ENCODE measurements at regions of chr9 and their contacts with region 1.

Region 1: DNA sequence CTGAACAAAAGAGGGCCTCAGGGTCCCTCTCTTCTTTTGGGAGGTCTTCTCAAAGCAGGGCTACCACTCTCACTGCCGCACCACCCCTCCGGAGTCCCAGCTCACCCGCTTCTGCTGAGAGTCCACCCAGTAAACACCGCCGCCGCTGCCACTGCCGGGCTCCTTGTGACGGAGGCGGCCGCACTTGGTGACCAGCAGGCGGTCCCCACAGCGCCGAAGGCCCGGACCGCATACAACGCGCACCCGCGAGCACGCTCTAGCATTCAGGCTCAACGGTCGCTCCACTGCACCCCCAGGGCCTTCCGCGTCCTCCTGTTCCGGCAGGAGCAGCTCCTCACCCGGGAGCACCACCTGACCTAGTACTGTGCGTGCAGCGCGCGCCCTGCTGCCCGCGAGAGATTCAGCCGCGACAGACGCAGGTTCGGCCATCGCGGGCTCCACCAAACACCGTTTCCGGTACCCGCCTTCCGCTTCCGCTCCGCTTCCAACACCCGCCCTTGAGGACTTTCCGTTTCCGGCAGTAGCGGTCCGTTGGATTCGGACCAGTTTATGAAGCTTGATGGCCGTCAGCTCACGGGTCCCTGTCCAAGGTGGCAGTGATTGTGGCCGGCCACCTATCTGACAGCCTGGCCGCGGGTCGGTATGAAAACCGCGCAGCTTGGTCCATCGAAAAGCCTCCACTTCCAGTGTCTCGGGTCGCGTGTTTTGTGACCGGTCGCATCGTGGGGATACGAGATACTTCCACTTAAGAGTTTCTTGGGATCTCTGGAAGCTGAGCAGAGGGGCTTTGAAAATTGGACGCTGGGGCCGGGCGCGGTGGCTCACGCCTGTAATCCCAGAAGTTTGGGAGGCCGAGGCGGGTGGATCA is at the start of gene EXOSC3:
- DNase-seq: peak; percentile 91 to 95
- ATAC-seq: peak; percentile 95 to 99 (median 98)
- H3K4me3 ChIP-seq: peak within 1 kb of the TSS; percentile 92
- H3K27ac ChIP-seq: peak within 1 kb of the TSS; percentile 86
- H3K4me1 ChIP-seq: peaks cover 5% of the 10 kb centered on the region
- H3K27me3 ChIP-seq: peaks cover 0 to 4% (median 0%) of the 10 kb centered on the region in 3 donors
- CTCF ChIP-seq: peak; percentile 20
- total RNA-seq, gene EXOSC3: 12.9 to 18.9 (median 13.9) TPM

Region 2: DNA sequence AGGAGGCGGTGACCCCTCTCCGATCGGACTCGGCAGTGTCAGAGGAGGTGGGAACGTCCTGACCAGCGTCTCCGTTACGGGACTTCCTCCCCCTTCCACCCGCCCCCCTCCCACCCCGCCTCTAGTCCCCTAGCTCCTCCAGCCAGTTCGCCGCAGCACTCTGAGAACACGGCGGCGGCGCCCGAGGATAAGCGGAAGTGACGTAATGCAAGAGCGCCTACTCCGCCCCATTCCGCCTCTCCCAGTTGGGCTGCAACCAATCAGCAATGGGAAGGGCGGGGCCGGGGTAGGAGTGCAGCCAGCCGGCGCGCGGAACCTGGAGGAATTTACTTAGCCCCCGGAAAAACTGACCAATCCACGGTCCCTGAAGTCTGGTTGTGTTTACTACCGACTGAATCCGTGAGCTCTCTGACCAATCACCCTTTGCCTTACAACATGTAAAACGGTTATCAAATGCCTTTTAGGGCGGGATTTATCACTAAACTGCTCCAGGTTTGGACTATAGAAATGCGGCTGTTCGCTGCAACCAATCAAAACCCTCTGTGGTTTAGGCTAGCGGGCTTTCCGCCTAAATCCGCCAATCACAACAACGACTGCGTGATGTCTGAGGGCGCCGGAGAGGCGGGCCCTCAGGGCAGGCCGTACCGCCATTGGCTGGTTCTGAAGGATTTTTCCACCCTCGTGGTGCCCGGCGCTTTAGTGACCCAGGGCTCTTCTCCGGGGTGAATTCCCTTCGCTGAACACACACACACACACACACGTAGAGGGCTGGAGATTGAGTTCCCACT is 319.4 kb before region 1 on chr9 and contains the start of gene ZBTB5:
- intact Hi-C with region 1: loop called in 1 of 2 experiments (anchors 10 kb)
- DNase-seq: peak; percentile 99
- ATAC-seq: peak; percentile 89 to 92 (median 90)
- H3K4me3 ChIP-seq: peak within 1 kb of the TSS; percentile 96
- H3K27ac ChIP-seq: peak within 1 kb of the TSS; percentile 99
- H3K4me1 ChIP-seq: peaks cover 19% of the 10 kb centered on the region
- H3K27me3 ChIP-seq: no peaks in the 10 kb centered on the region
- CTCF ChIP-seq: no peak
- total RNA-seq, gene ZBTB5: 5.2 to 6.0 (median 5.3) TPM

Region 3: DNA sequence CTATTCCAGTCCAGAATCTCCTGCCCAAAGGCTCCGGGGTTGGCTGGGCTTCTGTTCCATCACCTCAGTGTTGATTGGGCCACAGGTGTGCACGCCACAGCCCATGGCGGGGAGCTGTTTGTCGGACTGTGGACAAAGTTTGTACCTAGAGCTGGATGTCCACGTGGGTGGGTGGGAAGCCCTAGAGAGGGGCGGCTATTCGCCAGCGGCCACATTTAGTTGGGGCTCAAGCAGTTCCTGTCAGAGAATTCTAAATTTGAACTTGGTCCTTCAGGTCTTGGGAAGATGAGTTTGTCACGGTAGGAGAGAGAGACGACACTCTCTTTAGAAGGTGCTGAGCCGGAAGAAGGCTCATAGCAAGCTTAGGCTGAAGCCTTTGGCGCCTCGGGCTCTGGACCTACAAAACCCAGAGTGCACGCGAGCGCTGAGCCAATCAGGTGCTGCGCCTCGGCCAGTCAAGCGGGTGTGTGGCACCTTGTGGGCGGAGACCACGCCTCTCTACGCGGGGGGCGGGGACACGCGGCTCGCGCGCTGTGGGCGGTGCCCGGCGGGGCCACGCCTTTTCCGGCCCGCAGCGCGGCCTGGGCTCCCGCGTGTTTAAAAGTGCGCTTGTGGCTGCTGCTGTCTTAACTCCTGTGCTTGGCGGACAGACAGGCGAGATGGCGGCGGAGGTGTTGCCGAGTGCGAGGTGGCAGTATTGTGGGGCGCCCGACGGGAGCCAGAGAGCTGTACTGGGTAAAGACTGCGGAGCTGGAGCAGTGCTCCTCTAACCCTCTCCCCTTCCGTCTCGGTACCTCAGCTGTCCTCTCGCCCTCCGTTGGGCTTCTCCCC is 299.2 kb before region 1 on chr9 and contains the start of gene POLR1E:
- intact Hi-C with region 1: loop called in 1 of 2 experiments (anchors 10 kb)
- DNase-seq: peak; percentile 94 to 97
- ATAC-seq: peak; percentile 98 to 100 (median 99)
- H3K4me3 ChIP-seq: peak within 1 kb of the TSS; percentile 85
- H3K27ac ChIP-seq: peak within 1 kb of the TSS; percentile 92
- H3K4me1 ChIP-seq: peaks cover 11% of the 10 kb centered on the region
- H3K27me3 ChIP-seq: no peaks in the 10 kb centered on the region
- CTCF ChIP-seq: no peak
- total RNA-seq, gene POLR1E: 17.6 to 22.5 (median 21.8) TPM

Region 4: DNA sequence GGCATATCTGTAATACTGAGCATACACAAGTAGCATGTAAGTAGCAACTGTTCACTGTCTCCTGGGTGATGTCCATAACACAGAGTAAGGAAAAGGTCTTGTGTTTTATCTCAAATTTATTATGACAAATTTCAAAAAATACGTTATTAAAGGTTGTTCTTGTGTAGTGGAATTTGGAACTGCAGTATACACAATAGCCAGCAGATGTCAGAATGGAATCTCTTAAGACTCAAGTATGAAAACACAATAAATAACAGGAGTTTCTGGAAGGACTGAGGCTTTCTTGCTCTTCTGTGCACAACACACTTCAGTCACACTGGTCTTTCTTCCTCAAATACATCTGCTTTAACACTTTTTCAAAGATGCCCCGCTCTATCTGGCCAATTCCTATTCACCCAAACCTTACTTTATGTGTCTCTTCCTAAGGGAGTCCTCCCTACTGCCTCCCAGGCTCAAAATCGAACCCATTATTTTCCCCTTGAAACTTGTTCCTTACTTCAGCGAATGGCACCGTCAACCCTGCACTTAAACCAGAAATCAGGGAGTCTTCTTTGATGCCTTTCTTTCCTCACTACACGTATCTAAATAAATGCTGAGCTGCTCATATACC is 202.2 kb before region 1 on chr9:
- intact Hi-C with region 1: loop called in 1 of 2 experiments (anchors 10 kb)
- DNase-seq: no peak
- ATAC-seq: peak; percentile 68 to 85 (median 73)
- H3K4me3 ChIP-seq: no peak overlapping the region
- H3K27ac ChIP-seq: no peak overlapping the region
- H3K4me1 ChIP-seq: no peaks in the 10 kb centered on the region
- H3K27me3 ChIP-seq: no peaks in the 10 kb centered on the region
- CTCF ChIP-seq: peak; percentile 80

Region 5: GRCh38 chr9:37800631-37801286 is 15.9 kb after region 1 on chr9 and contains the start of gene DCAF10:
- intact Hi-C with region 1: loop called in 1 of 2 experiments (anchors 1 kb)
- DNase-seq: peak; percentile 90 to 93
- ATAC-seq: peak; percentile 96 to 98 (median 97)
- H3K4me3 ChIP-seq: peak within 1 kb of the TSS; percentile 82
- H3K27ac ChIP-seq: peak within 1 kb of the TSS; percentile 82
- H3K4me1 ChIP-seq: peaks cover 21% of the 10 kb centered on the region
- H3K27me3 ChIP-seq: no peaks in the 10 kb centered on the region
- CTCF ChIP-seq: no peak
- total RNA-seq, gene DCAF10: 20.2 to 27.2 (median 22.4) TPM

Measured in psoas muscle (tissue), 8 donors.